ENCODE measurements at regions of chr9 and their contacts with region 1.

Region 1: DNA sequence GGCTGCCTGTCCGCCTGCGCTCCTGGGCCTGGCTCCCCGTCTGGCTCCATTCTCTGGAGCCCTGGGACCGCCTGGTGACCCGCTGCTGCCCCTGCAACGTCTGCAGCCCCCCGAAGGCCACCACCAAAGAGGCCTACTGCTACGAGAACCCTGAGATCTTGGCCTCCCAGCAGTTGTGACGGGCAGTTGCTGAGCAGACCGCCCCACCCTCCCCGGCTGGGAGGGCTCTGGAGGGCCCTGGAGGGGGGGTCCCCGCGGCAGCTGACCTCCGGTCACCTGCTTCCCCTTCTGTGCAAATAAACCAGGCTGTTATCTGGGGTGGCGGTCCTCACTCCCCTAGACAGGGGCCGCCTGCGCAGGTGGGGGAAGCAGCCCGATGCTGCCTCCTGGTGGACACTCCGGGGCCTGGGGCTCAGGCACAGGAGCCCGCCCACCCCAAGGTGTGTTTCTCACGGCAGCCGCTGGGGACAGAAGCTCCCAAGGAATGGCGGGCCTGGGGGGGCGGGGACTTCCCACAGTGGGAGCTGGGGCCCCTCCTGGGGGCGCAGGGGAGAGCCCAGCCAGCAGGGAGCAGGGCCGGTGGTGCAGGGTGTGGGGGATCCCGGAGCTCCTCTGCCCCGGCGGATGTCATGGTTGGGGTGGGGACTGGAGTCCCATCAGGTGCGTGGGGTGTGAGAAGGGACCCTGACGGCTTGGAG is 4.7 kb upstream of the TUBB4B start:
- DNase-seq: peak; percentile 87
- H3K4me3 ChIP-seq: peak overlapping the region; percentile 50
- H3K27ac ChIP-seq: no peak overlapping the region
- H3K4me1 ChIP-seq: peaks cover 53% of the 10 kb centered on the region
- H3K27me3 ChIP-seq: peaks cover 44% of the 10 kb centered on the region
- CTCF ChIP-seq: peak; percentile 99

Region 2: DNA sequence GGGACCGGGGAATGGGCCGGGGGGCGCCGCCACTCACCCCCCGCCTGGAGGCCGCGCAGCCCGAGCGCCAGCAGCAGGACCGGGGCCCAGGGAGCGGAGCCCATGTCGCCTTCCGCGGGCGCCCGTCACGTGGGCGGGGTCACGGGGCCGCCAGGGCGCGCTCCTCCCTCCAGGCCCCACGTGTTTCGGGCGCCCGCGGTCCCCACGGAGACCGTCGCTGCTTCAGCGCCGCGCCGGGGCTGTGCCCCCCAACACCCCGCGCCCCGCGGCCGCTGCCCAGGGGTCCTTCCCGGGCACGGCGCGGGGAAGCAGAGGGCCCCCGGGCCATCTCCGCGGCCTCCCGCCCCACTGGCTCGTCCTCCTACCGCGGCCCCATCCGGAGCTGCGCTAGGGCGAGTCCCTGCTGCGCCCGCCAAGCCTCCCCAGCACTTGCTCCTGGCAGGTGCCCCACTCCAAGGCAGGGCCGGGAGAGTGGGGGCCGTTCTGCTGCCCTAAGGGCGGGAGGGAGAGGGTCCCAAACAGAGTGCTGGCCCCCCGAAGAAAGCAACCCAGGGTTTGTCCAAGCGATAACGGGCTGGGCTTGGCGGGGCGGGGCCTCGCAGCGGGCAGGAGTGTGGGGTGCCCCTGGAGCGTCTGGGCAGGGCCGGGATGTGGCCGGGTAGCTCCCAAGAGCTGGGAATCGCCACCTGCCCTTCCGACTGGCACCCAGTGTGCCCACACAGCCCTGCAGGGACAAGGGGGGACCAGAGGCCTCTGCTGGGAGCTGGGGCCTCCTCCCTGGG is 121.6 kb before region 1 on chr9 and contains the start of gene DPP7:
- intact Hi-C with region 1: loop called (anchors 5 kb)
- DNase-seq: peak; percentile 82
- H3K4me3 ChIP-seq: peak within 1 kb of the TSS; percentile 94
- H3K27ac ChIP-seq: peak within 1 kb of the TSS; percentile 92
- H3K4me1 ChIP-seq: peaks cover 46% of the 10 kb centered on the region
- H3K27me3 ChIP-seq: no peaks in the 10 kb centered on the region
- CTCF ChIP-seq: no peak
- total RNA-seq, gene DPP7: 130 TPM

Region 3: DNA sequence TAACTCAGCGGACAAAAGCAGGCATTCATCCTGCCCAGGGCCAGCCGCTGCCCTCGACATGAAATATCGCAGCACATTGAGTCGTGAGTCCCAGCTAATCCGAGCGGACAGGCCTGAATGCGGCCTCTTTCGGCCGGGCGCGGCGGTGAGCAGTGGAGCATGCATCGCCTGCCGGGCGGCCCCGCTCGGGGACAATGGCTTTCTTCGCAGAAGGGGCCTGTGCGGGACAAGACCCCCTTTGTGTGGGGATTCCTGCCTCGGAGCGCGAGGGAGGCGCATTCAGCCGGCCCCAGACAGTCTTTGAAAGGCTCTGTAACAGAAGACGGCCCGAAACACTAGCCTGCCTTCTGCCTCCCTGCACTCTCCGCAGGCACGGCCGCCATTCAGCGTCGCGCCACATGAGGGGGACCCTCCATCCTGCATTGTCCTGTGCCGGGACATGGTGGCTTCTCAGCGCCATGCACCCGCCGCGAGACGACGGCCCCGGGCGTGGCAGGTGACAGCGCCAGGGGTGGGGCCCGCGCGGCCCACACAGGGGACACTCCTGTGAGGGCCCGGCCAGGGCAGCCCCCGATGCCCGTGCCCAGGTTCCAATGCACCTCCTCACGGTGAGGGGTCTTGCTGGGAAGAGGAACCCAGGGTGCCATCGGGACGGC is 134.6 kb after region 1 on chr9:
- intact Hi-C with region 1: no loop called
- DNase-seq: no peak
- H3K4me3 ChIP-seq: no peak overlapping the region
- H3K27ac ChIP-seq: no peak overlapping the region
- H3K4me1 ChIP-seq: peaks cover 9% of the 10 kb centered on the region
- H3K27me3 ChIP-seq: no peaks in the 10 kb centered on the region
- CTCF ChIP-seq: no peak

Measured in left ventricle myocardium inferior (tissue), 1 donor.